Heart right ventricle (tissue), 16 donors: ENCODE measurements at regions of chr2 and their contacts with region 1.

Region 1: DNA sequence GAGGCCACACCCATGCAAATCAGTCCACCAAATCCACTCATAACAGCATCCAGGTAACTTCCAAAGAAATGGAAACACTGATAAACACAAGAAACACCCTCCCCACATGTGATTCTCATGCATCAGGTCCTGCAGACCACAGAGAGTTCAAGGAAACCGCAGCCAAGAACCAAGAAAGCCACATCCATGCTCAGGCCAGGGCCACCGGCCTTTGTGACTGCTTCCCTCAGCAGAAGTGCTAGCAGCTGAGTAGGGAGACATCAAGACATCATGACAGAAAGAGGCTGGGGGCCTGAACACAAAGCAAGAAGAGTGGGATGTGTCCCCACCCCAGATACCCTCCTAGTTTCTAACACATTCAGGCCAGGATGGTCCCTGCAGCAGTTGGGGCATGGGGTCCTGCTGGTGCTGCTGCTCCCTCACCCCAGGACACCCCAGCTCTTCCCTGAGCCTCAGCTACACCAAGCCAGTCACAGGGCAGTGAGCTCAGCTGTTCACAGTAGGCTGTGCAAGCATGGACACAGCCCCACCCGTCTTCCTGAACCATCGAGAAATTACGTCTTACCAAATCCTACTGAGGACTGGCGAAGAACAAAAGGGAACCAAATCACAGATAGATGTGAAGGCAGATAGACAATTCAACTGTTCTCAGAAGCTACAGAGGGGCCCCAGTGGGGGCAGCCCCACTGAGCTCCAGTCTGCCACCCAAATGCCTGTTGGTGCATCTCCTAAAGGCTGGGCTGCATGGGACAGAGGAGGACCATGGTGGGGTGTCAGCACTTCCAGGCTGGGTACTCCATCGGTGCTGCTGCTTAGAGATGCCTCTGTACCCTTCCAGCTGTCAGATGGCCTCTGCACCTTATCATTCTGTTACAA is 60.9 kb downstream of the HDAC4 start:
- DNase-seq: peak in 1 of 2 donors; percentile 2
- ATAC-seq: peak in 1 of 8 donors; percentile 20
- H3K4me3 ChIP-seq: no peak overlapping the region
- H3K27ac ChIP-seq: no peak overlapping the region
- H3K4me1 ChIP-seq: peaks cover 0 to 33% (median 23%) of the 10 kb centered on the region in 9 donors
- H3K27me3 ChIP-seq: no peaks in the 10 kb centered on the region
- CTCF ChIP-seq: no peak

Region 2: GRCh38 chr2:238573065-238573778 is 766.7 kb before region 1 on chr2:
- intact Hi-C with region 1: no loop called
- DNase-seq: no peak
- ATAC-seq: no peak
- H3K4me3 ChIP-seq: no peak overlapping the region
- H3K27ac ChIP-seq: no peak overlapping the region
- H3K4me1 ChIP-seq: peaks cover 0 to 3% (median 0%) of the 10 kb centered on the region in 9 donors
- H3K27me3 ChIP-seq: peaks cover 0 to 6% (median 1%) of the 10 kb centered on the region in 7 donors
- CTCF ChIP-seq: peak in 8 of 9 donors; percentile 30 to 55 (median 46)

Region 3: DNA sequence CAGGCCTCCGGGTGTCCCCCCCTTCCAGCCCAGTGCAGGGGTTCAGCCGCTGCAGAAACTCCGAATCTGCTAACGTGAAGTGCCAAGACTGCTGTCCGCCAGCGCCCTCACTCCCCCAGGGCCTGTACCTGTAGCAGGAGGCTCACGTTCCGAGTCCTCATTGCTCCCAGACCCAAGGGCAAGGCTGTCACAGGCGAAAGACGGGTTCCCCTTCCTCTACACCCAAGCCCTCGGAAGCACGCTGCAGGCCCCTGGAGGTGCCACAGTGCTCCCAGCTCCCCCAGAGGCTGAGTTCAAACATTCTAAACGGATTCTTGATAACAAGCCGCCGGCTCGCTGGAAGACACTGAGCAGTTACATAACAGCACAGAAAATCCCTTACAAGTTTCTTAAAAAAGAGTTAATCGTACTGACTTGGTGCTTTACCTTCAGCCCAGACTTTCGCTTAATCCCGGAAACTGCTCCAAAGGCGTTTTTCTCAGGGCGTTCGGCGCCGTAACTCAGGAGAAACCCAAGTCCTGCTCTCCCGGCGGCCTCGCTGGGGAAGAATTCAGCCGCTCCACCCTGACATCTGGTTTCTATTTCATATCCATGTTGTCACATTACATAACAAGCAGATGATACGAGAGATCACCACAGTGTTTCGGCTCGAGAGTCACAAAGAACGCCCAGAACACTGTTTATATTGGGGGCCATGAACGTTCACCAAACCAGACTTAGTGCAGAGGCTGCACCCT is 31.1 kb before region 1 on chr2:
- intact Hi-C with region 1: no loop called
- DNase-seq: peak in 1 of 2 donors; percentile 48
- ATAC-seq: peak in 7 of 8 donors; percentile 11 to 66 (median 54)
- H3K4me3 ChIP-seq: peak overlapping the region; percentile 8 to 63 (median 48)
- H3K27ac ChIP-seq: peak overlapping the region; percentile 70 to 96 (median 89)
- H3K4me1 ChIP-seq: peaks cover 35 to 100% (median 92%) of the 10 kb centered on the region in 9 donors
- H3K27me3 ChIP-seq: no peaks in the 10 kb centered on the region
- CTCF ChIP-seq: peak in 2 of 9 donors; percentile 27 to 37

Region 4: GRCh38 chr2:239318790-239319661 is 20.9 kb before region 1 on chr2:
- intact Hi-C with region 1: no loop called
- DNase-seq: peak in 1 of 2 donors; percentile 45
- ATAC-seq: peak in 7 of 8 donors; percentile 20 to 71 (median 57)
- H3K4me3 ChIP-seq: peak overlapping the region in 9 of 10 donors; percentile 4 to 46 (median 43)
- H3K27ac ChIP-seq: peak overlapping the region; percentile 16 to 88 (median 80)
- H3K4me1 ChIP-seq: peaks cover 11 to 61% (median 47%) of the 10 kb centered on the region in 9 donors
- H3K27me3 ChIP-seq: no peaks in the 10 kb centered on the region
- CTCF ChIP-seq: no peak

Region 5: GRCh38 chr2:239393388-239394340 is 53.7 kb after region 1 on chr2:
- intact Hi-C with region 1: loop called in 2 of 10 experiments (anchors 5 kb)
- DNase-seq: peak; percentile 71 to 79
- ATAC-seq: peak in 6 of 8 donors; percentile 28 to 73 (median 60)
- H3K4me3 ChIP-seq: no peak overlapping the region
- H3K27ac ChIP-seq: peak overlapping the region in 2 of 10 donors; percentile 10 to 58
- H3K4me1 ChIP-seq: peaks cover 6 to 79% (median 62%) of the 10 kb centered on the region in 9 donors
- H3K27me3 ChIP-seq: no peaks in the 10 kb centered on the region
- CTCF ChIP-seq: peak in 2 of 9 donors; percentile 9 to 10